H1 (cell line): ENCODE measurements at regions of chr14 and their contacts with region 1.

Region 1: GRCh38 chr14:38721822-38722431 is 381.1 kb downstream of the SEC23A start:
- DNase-seq: peak; percentile 19 to 88
- H3K4me3 ChIP-seq: no peak overlapping the region
- H3K27ac ChIP-seq: no peak overlapping the region
- H3K4me1 ChIP-seq: no peaks in the 10 kb centered on the region
- H3K27me3 ChIP-seq: peaks cover 0 to 1% (median 0%) of the 10 kb centered on the region in 4 experiments; a peak in 1 of 7 replicates
- CTCF ChIP-seq: peak in 2 of 3 experiments; percentile 89 to 95; a peak in 3 of 4 replicates
- EP300 ChIP-seq: no peak
- POLR2A ChIP-seq: no peak
- RAD21 ChIP-seq: peak; percentile 93 to 96

Region 2: DNA sequence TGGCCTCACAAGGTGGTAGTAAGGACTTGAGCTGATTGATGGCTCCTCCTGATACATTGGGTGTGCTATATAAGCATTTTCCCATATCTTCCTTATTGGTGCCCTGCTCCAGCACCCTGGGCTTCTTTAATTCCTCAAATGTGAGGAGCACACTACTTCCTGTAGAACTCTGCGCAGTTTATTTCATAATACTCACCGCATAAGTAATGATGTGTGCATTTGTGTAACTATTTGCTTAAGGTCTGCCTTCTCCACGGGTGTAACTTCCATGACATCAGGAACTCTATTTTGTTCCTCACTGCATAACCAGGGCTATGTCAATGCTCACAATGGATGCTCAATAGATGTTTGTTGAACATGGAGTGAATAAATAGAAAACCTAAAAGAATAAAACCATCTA is 11.0 kb before region 1 on chr14:
- CTCF ChIA-PET with region 1: interaction called, 13 read pairs
- POLR2A ChIA-PET with region 1: no interaction called
- DNase-seq: no peak
- H3K4me3 ChIP-seq: no peak overlapping the region
- H3K27ac ChIP-seq: no peak overlapping the region
- H3K4me1 ChIP-seq: no peaks in the 10 kb centered on the region
- H3K27me3 ChIP-seq: no peaks in the 10 kb centered on the region
- CTCF ChIP-seq: no peak
- EP300 ChIP-seq: no peak
- POLR2A ChIP-seq: no peak
- RAD21 ChIP-seq: no peak

Region 3: GRCh38 chr14:38731962-38732361 is 10.0 kb after region 1 on chr14:
- CTCF ChIA-PET with region 1: interaction called, 32 read pairs
- POLR2A ChIA-PET with region 1: no interaction called
- DNase-seq: no peak
- H3K4me3 ChIP-seq: no peak overlapping the region
- H3K27ac ChIP-seq: no peak overlapping the region
- H3K4me1 ChIP-seq: no peaks in the 10 kb centered on the region
- H3K27me3 ChIP-seq: no peaks in the 10 kb centered on the region
- CTCF ChIP-seq: no peak
- EP300 ChIP-seq: no peak
- POLR2A ChIP-seq: no peak
- RAD21 ChIP-seq: no peak

Region 4: GRCh38 chr14:38762426-38762825 is 40.5 kb after region 1 on chr14:
- CTCF ChIA-PET with region 1: interaction called, 12 read pairs
- POLR2A ChIA-PET with region 1: no interaction called
- DNase-seq: no peak
- H3K4me3 ChIP-seq: no peak overlapping the region
- H3K27ac ChIP-seq: no peak overlapping the region
- H3K4me1 ChIP-seq: no peaks in the 10 kb centered on the region
- H3K27me3 ChIP-seq: no peaks in the 10 kb centered on the region
- CTCF ChIP-seq: no peak
- EP300 ChIP-seq: no peak
- POLR2A ChIP-seq: no peak
- RAD21 ChIP-seq: no peak

Region 5: DNA sequence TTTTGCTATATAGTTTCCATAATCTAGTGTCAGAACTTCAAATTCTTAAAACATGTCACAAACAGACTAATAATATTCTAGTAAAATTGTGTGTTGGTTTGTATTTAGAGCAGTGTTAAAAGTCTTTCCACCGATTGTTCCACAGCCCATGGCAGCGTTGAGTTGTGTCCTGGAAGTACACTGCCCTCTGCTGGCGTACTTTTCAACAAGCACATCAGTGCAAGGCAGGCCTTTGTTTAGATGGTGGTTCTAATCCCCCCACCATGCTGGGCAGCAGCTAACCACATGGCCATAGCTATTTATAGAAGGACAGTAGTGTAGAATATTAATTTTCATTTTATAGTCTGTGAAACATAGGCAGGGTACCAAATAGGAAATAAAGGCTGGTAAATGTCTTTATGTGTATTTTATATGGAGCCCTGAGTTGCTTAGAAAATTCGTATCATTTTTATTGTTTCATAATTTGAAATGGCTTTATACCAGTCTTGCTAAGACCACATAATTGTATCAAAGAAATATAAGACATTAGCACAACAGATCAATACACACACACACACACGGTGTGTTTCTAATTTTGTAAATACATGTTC is 145.7 kb after region 1 on chr14:
- CTCF ChIA-PET with region 1: interaction called, 235 read pairs
- POLR2A ChIA-PET with region 1: no interaction called
- DNase-seq: peak; percentile 23 to 81
- H3K4me3 ChIP-seq: no peak overlapping the region
- H3K27ac ChIP-seq: no peak overlapping the region
- H3K4me1 ChIP-seq: peaks cover 0 to 3% (median 1%) of the 10 kb centered on the region in 4 experiments; a peak in 3 of 7 replicates
- H3K27me3 ChIP-seq: peaks cover 0 to 1% (median 0%) of the 10 kb centered on the region in 4 experiments; a peak in 1 of 7 replicates
- CTCF ChIP-seq: peak; percentile 77 to 86 (median 85)
- EP300 ChIP-seq: no peak
- POLR2A ChIP-seq: no peak
- RAD21 ChIP-seq: peak; percentile 95 to 96

Region 6: GRCh38 chr14:39034481-39035296 is 312.8 kb after region 1 on chr14:
- CTCF ChIA-PET with region 1: interaction called, 11 read pairs
- POLR2A ChIA-PET with region 1: no interaction called
- DNase-seq: no peak
- H3K4me3 ChIP-seq: no peak overlapping the region
- H3K27ac ChIP-seq: no peak overlapping the region
- H3K4me1 ChIP-seq: no peaks in the 10 kb centered on the region
- H3K27me3 ChIP-seq: peaks cover 0 to 1% (median 0%) of the 10 kb centered on the region in 4 experiments; a peak in 1 of 7 replicates
- CTCF ChIP-seq: peak; percentile 21 to 46 (median 42)
- EP300 ChIP-seq: no peak
- POLR2A ChIP-seq: no peak
- RAD21 ChIP-seq: peak; percentile 57 to 65